ENCODE measurements at regions of chr16 and their contacts with region 1.

Region 1: DNA sequence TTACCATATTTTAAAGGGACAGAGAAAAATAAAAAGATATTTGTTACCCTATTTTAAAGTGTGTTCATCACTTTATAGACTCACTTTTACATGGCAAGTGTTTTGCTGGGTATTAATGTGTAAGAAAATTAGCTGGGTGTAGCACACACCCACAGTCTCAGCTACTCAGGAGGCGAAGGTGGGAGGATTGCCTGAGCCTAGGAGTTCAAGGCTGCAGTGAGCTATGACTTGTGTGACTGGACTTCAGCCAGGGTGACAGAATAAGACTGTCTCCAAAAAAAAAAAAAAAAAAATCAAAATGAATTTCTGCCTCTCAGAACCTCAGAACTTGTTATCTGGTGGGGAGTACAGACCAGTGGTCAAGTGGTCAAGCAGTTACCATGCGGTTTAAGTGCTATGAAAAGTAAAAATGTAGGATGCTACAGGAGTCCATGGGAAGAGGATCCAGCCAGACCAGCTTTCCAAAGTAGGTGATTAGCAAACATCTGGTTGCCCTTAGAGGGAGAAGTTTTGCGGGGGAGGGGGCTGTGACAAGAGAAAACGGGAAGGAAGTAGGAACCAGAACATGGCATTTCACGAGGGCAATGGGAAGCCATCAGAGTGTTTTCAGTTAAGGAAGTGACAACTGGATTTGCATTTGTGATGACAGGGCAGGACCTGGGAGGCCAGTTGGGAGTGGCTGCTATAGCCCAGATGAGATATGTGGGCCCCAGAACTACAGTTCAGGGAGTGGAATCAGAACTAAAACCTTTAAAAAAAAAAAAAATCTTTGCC is 13.9 kb downstream of the CNEP1R1 start:
- DNase-seq: peak; percentile 6
- H3K4me3 ChIP-seq: no peak overlapping the region
- H3K27ac ChIP-seq: no peak overlapping the region
- H3K4me1 ChIP-seq: peaks cover 6% of the 10 kb centered on the region
- CTCF ChIP-seq: no peak

Region 2: DNA sequence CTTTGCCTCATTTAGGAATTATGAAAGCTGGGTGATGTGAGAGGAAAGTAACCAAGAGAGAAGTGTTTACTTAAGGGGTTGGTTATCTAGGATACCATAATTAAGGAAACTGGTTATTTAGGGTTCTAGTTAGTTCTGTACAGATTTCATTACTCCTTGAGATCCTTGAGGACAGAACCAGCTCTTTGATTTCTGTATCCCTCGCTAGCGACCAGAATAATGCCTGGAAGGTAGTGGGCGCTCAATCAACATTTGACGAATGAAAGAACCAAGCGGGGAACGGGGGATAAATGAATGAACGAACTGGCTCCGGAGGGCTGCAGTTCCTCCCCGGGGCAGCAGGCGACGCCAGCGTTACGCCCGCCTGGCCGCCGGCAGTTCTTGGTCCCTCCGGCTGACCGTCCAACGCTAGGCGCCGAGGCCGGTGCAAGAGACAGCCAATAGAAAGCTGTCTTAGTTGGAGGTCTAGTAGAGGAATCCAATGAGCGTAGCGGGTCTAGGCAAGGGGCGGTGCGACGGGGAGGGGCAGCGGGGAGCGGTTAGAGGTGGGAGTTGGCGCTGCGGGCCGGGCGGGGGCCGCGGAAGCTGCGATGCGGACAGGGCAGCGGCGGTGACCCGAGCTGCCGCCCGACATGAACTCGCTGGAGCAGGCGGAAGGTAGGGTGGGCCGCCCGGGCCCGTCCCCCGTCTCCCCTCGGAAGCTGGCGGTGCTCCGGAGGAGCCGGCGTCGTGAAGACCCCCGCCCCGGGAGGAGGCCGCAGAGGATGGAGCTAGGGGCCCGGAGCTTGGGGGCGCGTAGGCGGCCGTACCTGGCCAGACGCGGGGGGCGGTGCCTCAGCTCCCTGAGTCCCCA is 14.0 kb before region 1 on chr16 and contains the start of gene CNEP1R1:
- CTCF ChIA-PET with region 1: interaction called, 3 read pairs
- POLR2A ChIA-PET with region 1: interaction called, 11 read pairs
- intact Hi-C with region 1: no loop called
- DNase-seq: peak; percentile 96
- H3K4me3 ChIP-seq: peak within 1 kb of the TSS; percentile 98
- H3K27ac ChIP-seq: peak within 1 kb of the TSS; percentile 38
- H3K4me1 ChIP-seq: peaks cover 14% of the 10 kb centered on the region
- CTCF ChIP-seq: peak; percentile 99
- total RNA-seq, gene CNEP1R1: 19.9 and 23.1 TPM in 2 replicates

Region 3: DNA sequence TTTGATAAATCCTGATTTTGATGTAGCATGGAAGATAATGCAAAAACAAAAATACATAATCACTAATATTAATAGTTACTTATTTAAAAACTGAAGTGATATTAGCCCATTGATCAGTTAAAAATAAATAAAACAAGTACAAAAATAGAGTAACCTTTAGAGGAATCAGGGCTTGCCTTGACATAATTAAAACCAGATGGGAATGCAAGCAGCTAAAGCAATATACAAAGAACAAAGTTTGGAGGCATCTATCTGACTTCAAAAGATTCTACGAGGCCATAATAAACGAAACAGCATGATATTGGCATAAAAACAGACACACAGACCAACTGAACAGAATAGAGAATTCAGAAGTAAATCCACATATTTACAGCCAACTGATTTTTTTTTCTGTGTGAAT is 11.9 kb after region 1 on chr16:
- CTCF ChIA-PET with region 1: no interaction called
- POLR2A ChIA-PET with region 1: interaction called, 7 read pairs
- intact Hi-C with region 1: loop called (anchors 1 kb)
- DNase-seq: no peak
- H3K4me3 ChIP-seq: no peak overlapping the region
- H3K27ac ChIP-seq: no peak overlapping the region
- H3K4me1 ChIP-seq: no peaks in the 10 kb centered on the region
- CTCF ChIP-seq: no peak

Region 4: DNA sequence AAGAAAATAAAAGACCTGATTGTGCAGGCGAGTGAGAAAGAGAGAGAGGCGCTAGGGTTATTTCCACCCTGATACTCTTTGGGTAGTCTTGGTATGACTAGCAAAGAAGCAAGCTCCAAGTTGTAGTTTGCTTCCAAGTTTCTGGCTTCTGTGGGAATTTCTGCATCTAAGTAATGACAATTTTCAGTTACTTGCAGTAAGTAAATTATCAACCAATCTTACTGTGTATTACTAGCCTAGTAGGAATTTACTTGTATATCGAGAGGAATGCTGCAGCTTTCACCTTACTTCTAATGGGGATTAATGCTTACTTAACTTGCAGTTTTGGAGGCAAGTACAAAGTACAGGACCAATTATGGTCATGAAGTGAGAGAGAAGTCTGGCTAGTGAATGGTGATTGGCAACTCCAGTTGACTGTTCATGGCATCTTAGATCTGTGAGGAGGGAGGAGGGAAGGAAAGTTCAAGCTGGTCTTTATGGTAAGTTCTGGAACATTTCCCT is 146.1 kb after region 1 on chr16:
- CTCF ChIA-PET with region 1: no interaction called
- POLR2A ChIA-PET with region 1: no interaction called
- intact Hi-C with region 1: no loop called
- DNase-seq: no peak
- H3K4me3 ChIP-seq: no peak overlapping the region
- H3K27ac ChIP-seq: no peak overlapping the region
- H3K4me1 ChIP-seq: no peaks in the 10 kb centered on the region
- CTCF ChIP-seq: no peak

Region 5: GRCh38 chr16:50284131-50284911 is 245.4 kb after region 1 on chr16:
- CTCF ChIA-PET with region 1: no interaction called
- POLR2A ChIA-PET with region 1: no interaction called
- intact Hi-C with region 1: no loop called
- DNase-seq: peak; percentile 59
- H3K4me3 ChIP-seq: peak overlapping the region; percentile 9
- H3K27ac ChIP-seq: peak overlapping the region; percentile 46
- H3K4me1 ChIP-seq: peaks cover 65% of the 10 kb centered on the region
- CTCF ChIP-seq: no peak